B cell (primary cell): ENCODE measurements at regions of chr3 and their contacts with region 1.

Region 1: DNA sequence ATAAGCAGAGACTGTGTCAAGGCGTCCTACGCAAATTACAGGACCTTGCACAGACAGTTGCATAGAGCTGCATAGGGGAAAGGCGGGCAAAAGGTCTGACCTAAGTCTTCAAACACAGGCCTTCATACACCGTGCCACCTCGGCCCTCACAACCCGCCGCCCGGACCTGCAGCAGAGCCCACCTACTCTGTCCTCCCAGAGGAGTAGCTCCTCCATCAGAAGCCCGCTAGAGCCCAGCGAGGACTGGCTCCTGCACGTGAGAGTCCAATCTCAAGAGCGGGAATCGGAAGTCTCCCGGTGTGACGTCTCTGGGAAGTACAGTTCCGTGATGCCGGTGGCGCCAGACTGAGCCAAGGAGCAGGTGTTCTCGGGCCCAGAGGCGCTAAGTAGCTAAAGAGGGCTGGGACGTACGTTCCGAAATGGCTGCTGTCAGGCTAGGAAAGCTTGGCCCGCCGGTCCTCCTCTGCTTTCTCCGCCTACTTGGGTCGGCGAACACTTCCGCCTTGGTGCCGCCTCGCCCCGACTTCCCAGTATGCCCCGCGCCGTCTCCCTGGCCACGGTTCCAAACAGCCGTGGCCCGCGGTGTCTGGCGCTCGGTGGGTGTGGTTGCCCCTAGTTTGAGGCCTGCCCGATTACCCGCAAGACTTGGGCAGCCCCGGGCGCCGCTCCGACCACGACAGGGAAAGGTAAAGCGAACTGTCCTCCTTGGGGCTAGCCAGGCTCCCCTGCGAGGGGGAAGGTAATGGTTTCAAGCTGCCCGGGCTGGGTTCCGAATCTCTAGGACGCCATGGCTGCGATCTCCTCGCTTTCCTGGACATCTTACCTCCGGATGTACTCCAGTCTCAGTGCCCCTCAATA is at the starts of genes ASTE1 and NEK11:
- DNase-seq: peak; percentile 94
- ATAC-seq: peak; percentile 97
- H3K4me3 ChIP-seq: peak within 1 kb of the TSS; percentile 90 to 95 (median 91)
- H3K4me3 Mint-ChIP-seq: peak within 1 kb of the TSS; percentile 97
- H3K27ac ChIP-seq: peak within 1 kb of the TSS; percentile 91 to 94
- H3K27ac Mint-ChIP-seq: peak within 1 kb of the TSS; percentile 98
- H3K4me1 ChIP-seq: peaks cover 31 to 32% of the 10 kb centered on the region in 2 donors
- H3K4me1 Mint-ChIP-seq: peaks cover 48% of the 10 kb centered on the region
- H3K27me3 ChIP-seq: no peaks in the 10 kb centered on the region
- H3K27me3 Mint-ChIP-seq: no peaks in the 10 kb centered on the region
- CTCF ChIP-seq: no peak
- total RNA-seq, gene ASTE1: 21.8 and 23.0 TPM in 2 replicates
- total RNA-seq, gene NEK11: 5.7 and 7.7 TPM in 2 replicates

Region 2: GRCh38 chr3:130834476-130834875 is 192.1 kb before region 1 on chr3:
- CTCF ChIA-PET with region 1: no interaction called
- POLR2A ChIA-PET with region 1: no interaction called
- intact Hi-C with region 1: no loop called
- DNase-seq: no peak
- ATAC-seq: no peak
- H3K4me3 ChIP-seq: no peak overlapping the region
- H3K4me3 Mint-ChIP-seq: no peak overlapping the region
- H3K27ac ChIP-seq: no peak overlapping the region
- H3K27ac Mint-ChIP-seq: no peak overlapping the region
- H3K4me1 ChIP-seq: peaks cover 3 to 5% of the 10 kb centered on the region in 2 donors
- H3K4me1 Mint-ChIP-seq: peaks cover 3% of the 10 kb centered on the region
- H3K27me3 ChIP-seq: peaks cover 0 to 4% (median 0%) of the 10 kb centered on the region in 4 experiments
- H3K27me3 Mint-ChIP-seq: peaks cover 10% of the 10 kb centered on the region
- CTCF ChIP-seq: no peak

Region 3: DNA sequence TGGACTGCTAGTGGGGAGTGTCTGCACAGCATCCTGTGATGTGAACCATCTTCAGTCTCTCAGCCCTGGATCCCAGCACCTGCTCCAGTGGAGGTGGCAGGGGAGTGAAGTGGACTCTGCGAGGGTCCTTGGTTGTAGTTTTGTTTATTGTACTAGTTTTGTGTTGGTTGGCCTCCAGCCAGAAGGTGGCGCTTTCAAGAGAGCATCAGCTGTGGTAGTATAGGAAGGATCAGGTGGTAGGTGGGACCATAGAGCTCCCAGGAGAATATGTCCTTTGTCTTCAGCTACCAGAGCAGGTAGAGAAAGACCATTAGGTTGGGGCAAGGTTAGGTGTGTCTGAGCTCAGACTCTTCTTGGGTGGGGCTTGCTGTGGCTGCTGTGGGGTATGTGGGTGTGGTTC is 21.0 kb after region 1 on chr3:
- CTCF ChIA-PET with region 1: no interaction called
- POLR2A ChIA-PET with region 1: no interaction called
- intact Hi-C with region 1: no loop called
- DNase-seq: no peak
- ATAC-seq: no peak
- H3K4me3 ChIP-seq: no peak overlapping the region
- H3K4me3 Mint-ChIP-seq: no peak overlapping the region
- H3K27ac ChIP-seq: no peak overlapping the region
- H3K27ac Mint-ChIP-seq: no peak overlapping the region
- H3K4me1 ChIP-seq: no peaks in the 10 kb centered on the region
- H3K4me1 Mint-ChIP-seq: no peaks in the 10 kb centered on the region
- H3K27me3 ChIP-seq: no peaks in the 10 kb centered on the region
- H3K27me3 Mint-ChIP-seq: peaks cover 14% of the 10 kb centered on the region
- CTCF ChIP-seq: no peak

Region 4: GRCh38 chr3:131381444-131382291 is 355.1 kb after region 1 on chr3 and contains the start of gene NUDT16:
- CTCF ChIA-PET with region 1: no interaction called
- POLR2A ChIA-PET with region 1: interaction called, 4 read pairs
- intact Hi-C with region 1: loop called (anchors 2 kb)
- DNase-seq: peak; percentile 97
- ATAC-seq: peak; percentile 98
- H3K4me3 ChIP-seq: peak within 1 kb of the TSS; percentile 65 to 99 (median 92)
- H3K4me3 Mint-ChIP-seq: peak within 1 kb of the TSS; percentile 98
- H3K27ac ChIP-seq: peak within 1 kb of the TSS; percentile 57 to 59
- H3K27ac Mint-ChIP-seq: peak within 1 kb of the TSS; percentile 96
- H3K4me1 ChIP-seq: peaks cover 17 to 26% of the 10 kb centered on the region in 2 donors
- H3K4me1 Mint-ChIP-seq: peaks cover 26% of the 10 kb centered on the region
- H3K27me3 ChIP-seq: no peaks in the 10 kb centered on the region
- H3K27me3 Mint-ChIP-seq: no peaks in the 10 kb centered on the region
- CTCF ChIP-seq: peak; percentile 39
- total RNA-seq, gene NUDT16: 17.6 and 19.1 TPM in 2 replicates